ENCODE measurements at regions of chr22 and their contacts with region 1.

Region 1: GRCh38 chr22:37905534-37906363 is at the start of gene MICALL1:
- DNase-seq: peak; percentile 73
- H3K4me3 Mint-ChIP-seq: peak within 1 kb of the TSS; percentile 74
- H3K27ac Mint-ChIP-seq: peak within 1 kb of the TSS; percentile 73
- H3K4me1 Mint-ChIP-seq: peaks cover 28% of the 10 kb centered on the region
- H3K27me3 Mint-ChIP-seq: no peaks in the 10 kb centered on the region
- total RNA-seq, gene MICALL1: 21.8 to 24.1 TPM

Region 2: GRCh38 chr22:37782340-37783177 is 123.2 kb before region 1 on chr22:
- CTCF ChIA-PET with region 1: no interaction called
- POLR2A ChIA-PET with region 1: no interaction called
- DNase-seq: no peak
- H3K4me3 Mint-ChIP-seq: no peak overlapping the region
- H3K27ac Mint-ChIP-seq: no peak overlapping the region
- H3K4me1 Mint-ChIP-seq: no peaks in the 10 kb centered on the region
- H3K27me3 Mint-ChIP-seq: no peaks in the 10 kb centered on the region

Region 3: DNA sequence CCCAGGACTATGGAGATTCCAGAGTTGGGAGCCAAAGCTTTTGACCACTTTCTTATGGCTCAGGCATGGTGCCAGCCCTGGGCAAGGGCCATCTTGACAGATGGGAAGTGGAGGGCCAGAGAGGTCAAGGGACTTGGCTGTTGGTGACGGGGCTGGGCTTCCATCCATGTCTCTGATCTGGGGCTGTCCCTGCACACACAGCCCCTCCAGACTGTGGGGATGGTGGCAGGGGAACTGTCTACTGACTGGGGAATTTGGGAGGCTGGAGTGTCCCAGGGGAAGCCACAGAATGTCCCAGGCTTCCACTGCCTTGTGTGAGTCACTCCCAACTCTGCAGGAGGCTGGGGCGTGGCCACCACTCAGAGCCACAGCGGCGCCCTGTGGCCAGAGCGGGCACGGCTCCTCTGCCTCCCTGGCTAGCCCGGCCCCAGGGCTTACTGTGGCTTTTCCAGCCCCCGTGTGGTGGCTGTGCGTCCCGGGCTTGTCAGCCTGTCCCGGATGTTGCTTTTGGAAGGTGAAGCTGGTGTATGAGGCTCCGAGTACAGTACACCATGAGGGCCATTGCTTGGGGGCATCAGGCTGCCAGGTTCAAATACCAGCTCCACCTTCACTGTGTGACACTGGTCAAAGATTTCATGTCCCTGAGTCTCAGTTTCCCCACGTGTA is 28.1 kb after region 1 on chr22:
- CTCF ChIA-PET with region 1: interaction called, 10 read pairs
- POLR2A ChIA-PET with region 1: interaction called, 4 read pairs
- DNase-seq: peak; percentile 89
- H3K4me3 Mint-ChIP-seq: no peak overlapping the region
- H3K27ac Mint-ChIP-seq: no peak overlapping the region
- H3K4me1 Mint-ChIP-seq: peaks cover 13% of the 10 kb centered on the region
- H3K27me3 Mint-ChIP-seq: no peaks in the 10 kb centered on the region